ENCODE measurements at regions of chr15 and their contacts with region 1.

Region 1: GRCh38 chr15:60526127-60526625 is 47.2 kb upstream of the ICE2 start:
- DNase-seq: peak in 2 of 5 donors; percentile 29 to 52
- ATAC-seq: peak in 3 of 4 donors; percentile 42 to 71 (median 43)
- H3K4me3 ChIP-seq: no peak overlapping the region
- H3K27ac ChIP-seq: peak overlapping the region in 4 of 12 donors; percentile 18 to 36 (median 25)
- H3K4me1 ChIP-seq: peaks cover 0 to 34% (median 8%) of the 10 kb centered on the region in 12 donors
- H3K27me3 ChIP-seq: no peaks in the 10 kb centered on the region
- CTCF ChIP-seq: no peak
- POLR2A ChIP-seq: no peak

Region 2: GRCh38 chr15:60555291-60555690 is 29.1 kb after region 1 on chr15:
- intact Hi-C with region 1: loop called in 1 of 10 experiments (anchors 2 kb)
- DNase-seq: no peak
- ATAC-seq: no peak
- H3K4me3 ChIP-seq: no peak overlapping the region
- H3K27ac ChIP-seq: no peak overlapping the region
- H3K4me1 ChIP-seq: peaks cover 0 to 49% (median 17%) of the 10 kb centered on the region in 12 donors
- H3K27me3 ChIP-seq: no peaks in the 10 kb centered on the region
- CTCF ChIP-seq: no peak
- POLR2A ChIP-seq: no peak

Region 3: GRCh38 chr15:60585743-60586708 is 59.9 kb after region 1 on chr15:
- intact Hi-C with region 1: no loop called
- DNase-seq: peak in 4 of 5 donors; percentile 33 to 60 (median 40)
- ATAC-seq: peak; percentile 60 to 81 (median 79)
- H3K4me3 ChIP-seq: no peak overlapping the region
- H3K27ac ChIP-seq: peak overlapping the region in 2 of 12 donors; percentile 7 to 73
- H3K4me1 ChIP-seq: peaks cover 0 to 66% (median 23%) of the 10 kb centered on the region in 12 donors
- H3K27me3 ChIP-seq: no peaks in the 10 kb centered on the region
- CTCF ChIP-seq: peak; percentile 82 to 97 (median 91)
- POLR2A ChIP-seq: no peak